Heart left ventricle (tissue), 16 donors: ENCODE measurements at regions of chr7 and their contacts with region 1.

Region 1: GRCh38 chr7:91880413-91881241 is at the start of gene MTERF1:
- DNase-seq: peak; percentile 93 to 95 (median 94)
- ATAC-seq: peak; percentile 94 to 100 (median 100)
- H3K4me3 ChIP-seq: peak within 1 kb of the TSS; percentile 66 to 98 (median 78)
- H3K27ac ChIP-seq: peak within 1 kb of the TSS in 7 of 12 donors; percentile 8 to 70 (median 60)
- H3K4me1 ChIP-seq: peaks cover 0 to 25% (median 11%) of the 10 kb centered on the region in 12 donors
- H3K27me3 ChIP-seq: no peaks in the 10 kb centered on the region
- CTCF ChIP-seq: peak; percentile 85 to 100 (median 96)
- POLR2A ChIP-seq: peak in 1 of 2 donors; percentile 24
- total RNA-seq, gene MTERF1: 5.5 to 11.6 (median 7.3) TPM

Region 2: DNA sequence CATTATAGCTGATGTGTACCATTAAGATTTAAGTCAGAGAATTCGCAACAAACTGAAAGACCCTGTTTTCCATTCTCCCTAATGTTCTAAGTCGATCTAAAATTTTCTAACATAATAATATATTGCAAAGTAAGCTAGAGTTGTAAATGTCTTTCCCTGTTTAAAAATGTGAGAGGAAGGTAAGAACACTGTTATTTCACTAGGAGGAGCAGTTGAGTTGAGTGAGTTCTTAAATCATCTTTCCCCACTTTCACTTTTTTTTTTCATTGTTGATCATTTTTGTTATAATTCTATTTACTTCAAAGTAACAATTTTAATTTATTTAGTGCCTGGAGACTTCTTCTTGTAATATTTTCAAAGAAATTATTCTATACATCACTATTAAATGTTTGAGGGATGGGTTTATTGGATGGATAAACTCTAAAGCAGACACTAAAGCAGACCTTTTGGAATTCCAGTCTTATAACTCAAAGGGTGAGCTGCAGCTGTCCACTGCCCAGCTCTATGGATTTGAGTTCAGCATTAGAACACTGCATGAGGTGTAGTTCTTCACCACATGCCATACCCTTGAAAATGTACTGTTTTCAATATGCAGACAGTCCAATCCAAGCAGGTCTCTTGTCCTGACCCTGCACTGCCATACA is 797.7 kb before region 1 on chr7:
- intact Hi-C with region 1: loop called in 7 of 10 experiments (anchors 5 to 10 kb)
- DNase-seq: no peak
- ATAC-seq: peak in 1 of 4 donors; percentile 55
- H3K4me3 ChIP-seq: no peak overlapping the region
- H3K27ac ChIP-seq: peak overlapping the region in 7 of 12 donors; percentile 11 to 68 (median 48)
- H3K4me1 ChIP-seq: peaks cover 0 to 44% (median 25%) of the 10 kb centered on the region in 12 donors
- H3K27me3 ChIP-seq: no peaks in the 10 kb centered on the region
- CTCF ChIP-seq: peak; percentile 30 to 71 (median 56)
- POLR2A ChIP-seq: no peak

Region 3: DNA sequence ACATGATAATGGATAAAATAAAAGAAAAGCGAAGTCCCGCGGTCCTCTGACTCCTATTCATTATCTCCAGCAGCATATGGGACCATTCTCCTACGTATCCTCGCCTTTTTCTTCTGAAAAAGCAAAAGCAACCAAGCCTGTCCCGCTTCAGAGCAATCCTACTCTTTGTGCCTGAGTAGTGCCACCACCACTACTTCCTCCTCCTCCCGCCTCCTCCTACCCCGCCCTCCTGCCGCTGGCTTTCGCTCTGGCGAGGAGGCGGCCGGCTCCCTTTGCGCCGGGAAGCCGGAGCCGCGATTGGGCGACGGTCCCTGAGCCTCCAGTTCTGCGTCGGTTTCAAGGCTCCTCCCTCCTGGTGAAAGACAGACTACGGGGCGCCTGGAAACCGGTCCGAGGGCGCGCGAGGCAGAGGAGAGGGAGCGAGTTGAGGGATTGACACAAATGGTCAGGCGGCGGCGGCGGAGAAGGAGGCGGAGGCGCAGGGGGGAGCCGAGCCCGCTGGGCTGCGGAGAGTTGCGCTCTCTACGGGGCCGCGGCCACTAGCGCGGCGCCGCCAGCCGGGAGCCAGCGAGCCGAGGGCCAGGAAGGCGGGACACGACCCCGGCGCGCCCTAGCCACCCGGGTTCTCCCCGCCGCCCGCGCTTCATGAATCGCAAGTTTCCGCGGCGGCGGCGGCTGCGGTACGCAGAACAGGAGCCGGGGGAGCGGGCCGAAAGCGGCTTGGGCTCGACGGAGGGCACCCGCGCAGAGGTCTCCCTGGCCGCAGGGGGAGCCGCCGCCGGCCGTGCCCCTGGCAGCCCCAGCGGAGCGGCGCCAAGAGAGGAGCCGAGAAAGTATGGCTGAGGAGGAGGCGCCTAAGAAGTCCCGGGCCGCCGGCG is 616.3 kb before region 1 on chr7 and contains the start of gene FZD1:
- intact Hi-C with region 1: loop called in 1 of 10 experiments (anchors 5 kb)
- DNase-seq: peak; percentile 97 to 98 (median 97)
- ATAC-seq: peak; percentile 95 to 97 (median 97)
- H3K4me3 ChIP-seq: peak within 1 kb of the TSS; percentile 77 to 95 (median 86)
- H3K27ac ChIP-seq: peak within 1 kb of the TSS; percentile 91 to 97 (median 95)
- H3K4me1 ChIP-seq: peaks cover 0 to 35% (median 18%) of the 10 kb centered on the region in 12 donors
- H3K27me3 ChIP-seq: peaks cover 0 to 15% (median 0%) of the 10 kb centered on the region in 9 donors
- CTCF ChIP-seq: peak in 3 of 12 donors; percentile 5 to 30 (median 19)
- POLR2A ChIP-seq: peak in 1 of 2 donors; percentile 87
- total RNA-seq, gene FZD1: 11.5 to 29.8 (median 17.9) TPM

Region 4: DNA sequence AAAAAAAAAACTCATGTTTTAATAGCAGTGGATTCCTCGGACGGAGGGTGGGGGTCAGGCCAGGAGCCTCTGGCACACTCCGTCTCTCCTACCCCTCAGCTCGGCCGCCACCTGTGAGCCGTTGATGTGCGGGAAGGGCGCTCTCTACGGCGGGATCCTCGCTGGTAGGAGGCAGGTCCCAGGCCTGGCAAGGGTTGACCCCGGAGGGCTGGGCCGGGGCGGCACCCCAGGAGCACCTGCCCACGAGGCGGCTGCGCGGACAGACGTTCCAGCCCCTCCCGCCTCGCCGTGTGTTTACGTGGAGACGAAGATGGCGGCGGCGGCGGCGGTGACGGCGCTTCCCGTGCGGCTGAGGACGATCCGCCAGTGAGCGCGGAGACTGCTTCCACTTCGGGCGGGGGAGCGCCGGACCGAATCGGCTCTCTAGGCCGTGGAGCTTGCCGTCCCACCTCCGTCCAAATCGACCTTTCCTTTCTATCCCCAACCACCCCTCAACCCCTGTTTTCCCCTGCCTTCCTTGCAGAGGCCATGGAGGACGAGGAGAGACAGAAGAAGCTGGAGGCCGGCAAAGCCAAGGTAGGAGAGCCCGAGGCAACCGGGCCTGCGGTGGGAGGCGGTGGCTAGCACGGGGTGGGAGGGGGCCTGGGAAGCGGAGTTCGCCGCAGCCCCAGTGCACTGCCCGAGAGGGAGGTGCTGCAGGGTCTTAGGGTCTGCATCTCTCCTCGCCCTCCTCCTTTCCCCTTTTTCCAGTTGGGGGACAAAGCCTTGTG is 60.1 kb after region 1 on chr7 and contains the start of gene AKAP9:
- intact Hi-C with region 1: loop called in 3 of 10 experiments (anchors 2 to 10 kb)
- DNase-seq: peak; percentile 90 to 94 (median 92)
- ATAC-seq: peak; percentile 94 to 98 (median 96)
- H3K4me3 ChIP-seq: peak within 1 kb of the TSS; percentile 68 to 90 (median 80)
- H3K27ac ChIP-seq: peak within 1 kb of the TSS; percentile 86 to 96 (median 92)
- H3K4me1 ChIP-seq: peaks cover 0 to 32% (median 22%) of the 10 kb centered on the region in 12 donors
- H3K27me3 ChIP-seq: no peaks in the 10 kb centered on the region
- CTCF ChIP-seq: no peak
- POLR2A ChIP-seq: peak in 1 of 2 donors; percentile 68
- total RNA-seq, gene AKAP9: 38.2 to 58.6 (median 51.8) TPM

Region 5: GRCh38 chr7:92447345-92448204 is 566.9 kb after region 1 on chr7 and contains the start of gene GATAD1:
- intact Hi-C with region 1: loop called in 4 of 10 experiments (anchors 2 to 10 kb)
- DNase-seq: peak; percentile 93 to 94 (median 94)
- ATAC-seq: peak; percentile 94 to 100 (median 99)
- H3K4me3 ChIP-seq: peak within 1 kb of the TSS; percentile 81 to 100 (median 92)
- H3K27ac ChIP-seq: peak within 1 kb of the TSS; percentile 79 to 98 (median 96)
- H3K4me1 ChIP-seq: peaks cover 0 to 19% (median 11%) of the 10 kb centered on the region in 12 donors
- H3K27me3 ChIP-seq: no peaks in the 10 kb centered on the region
- CTCF ChIP-seq: peak in 10 of 12 donors; percentile 87 to 98 (median 94)
- POLR2A ChIP-seq: peak in 1 of 2 donors; percentile 70
- total RNA-seq, gene GATAD1: 8.5 to 20.5 (median 11.8) TPM